ACHN (cell line): ENCODE measurements at regions of chr20 and their contacts with region 1.

Region 1: GRCh38 chr20:8722276-8722928 is 346.5 kb upstream of the PLCB4 start:
- DNase-seq: peak; percentile 70

Region 2: DNA sequence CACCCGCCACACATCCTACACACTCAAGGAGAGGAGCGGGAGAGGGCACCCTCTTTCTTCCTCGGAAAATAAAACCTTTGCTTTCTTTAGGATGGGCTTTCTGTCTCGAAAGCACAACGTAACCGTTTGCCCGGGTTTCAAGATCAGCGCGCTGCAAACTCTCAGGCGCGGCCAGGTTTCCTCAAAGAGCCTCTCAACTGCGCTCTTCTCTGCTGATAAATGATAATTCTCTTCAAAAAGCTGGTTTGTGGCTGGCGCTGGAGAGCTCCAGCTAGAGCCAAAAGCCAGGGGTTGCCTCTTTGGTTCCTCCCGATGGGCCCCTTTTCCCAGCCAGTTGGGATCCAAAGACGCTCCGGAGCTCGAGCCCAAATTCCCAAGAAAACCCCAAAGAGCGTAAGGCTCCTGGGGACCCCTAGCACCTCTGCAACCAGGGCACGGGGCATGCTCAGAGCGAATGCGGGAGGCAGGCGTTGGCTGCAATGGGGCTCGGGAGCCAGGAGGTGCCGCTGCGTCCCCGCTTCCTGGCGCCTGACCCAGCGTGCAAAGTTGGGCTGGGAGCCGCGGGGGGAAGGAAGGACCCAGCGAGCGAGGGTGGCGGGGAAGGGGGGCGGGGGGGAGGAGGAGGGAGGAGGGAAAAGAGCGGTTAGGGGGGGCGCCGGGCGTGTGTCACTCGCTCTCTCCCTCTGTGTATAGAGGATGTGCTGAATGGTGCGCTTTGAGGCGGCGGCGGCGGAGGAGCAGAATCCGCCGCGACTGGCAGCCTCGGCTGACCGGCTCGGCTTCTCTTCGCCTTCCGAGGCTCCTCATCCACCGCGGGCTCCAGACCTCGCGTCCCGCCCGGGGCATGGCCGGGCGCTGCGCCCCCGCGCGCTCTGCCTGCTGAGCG is 590.6 kb before region 1 on chr20 and contains the start of gene PLCB1:
- in situ Hi-C with region 1: loop called (anchors 25 kb)
- DNase-seq: peak; percentile 61